ENCODE measurements at regions of chr1 and their contacts with region 1.

Region 1: DNA sequence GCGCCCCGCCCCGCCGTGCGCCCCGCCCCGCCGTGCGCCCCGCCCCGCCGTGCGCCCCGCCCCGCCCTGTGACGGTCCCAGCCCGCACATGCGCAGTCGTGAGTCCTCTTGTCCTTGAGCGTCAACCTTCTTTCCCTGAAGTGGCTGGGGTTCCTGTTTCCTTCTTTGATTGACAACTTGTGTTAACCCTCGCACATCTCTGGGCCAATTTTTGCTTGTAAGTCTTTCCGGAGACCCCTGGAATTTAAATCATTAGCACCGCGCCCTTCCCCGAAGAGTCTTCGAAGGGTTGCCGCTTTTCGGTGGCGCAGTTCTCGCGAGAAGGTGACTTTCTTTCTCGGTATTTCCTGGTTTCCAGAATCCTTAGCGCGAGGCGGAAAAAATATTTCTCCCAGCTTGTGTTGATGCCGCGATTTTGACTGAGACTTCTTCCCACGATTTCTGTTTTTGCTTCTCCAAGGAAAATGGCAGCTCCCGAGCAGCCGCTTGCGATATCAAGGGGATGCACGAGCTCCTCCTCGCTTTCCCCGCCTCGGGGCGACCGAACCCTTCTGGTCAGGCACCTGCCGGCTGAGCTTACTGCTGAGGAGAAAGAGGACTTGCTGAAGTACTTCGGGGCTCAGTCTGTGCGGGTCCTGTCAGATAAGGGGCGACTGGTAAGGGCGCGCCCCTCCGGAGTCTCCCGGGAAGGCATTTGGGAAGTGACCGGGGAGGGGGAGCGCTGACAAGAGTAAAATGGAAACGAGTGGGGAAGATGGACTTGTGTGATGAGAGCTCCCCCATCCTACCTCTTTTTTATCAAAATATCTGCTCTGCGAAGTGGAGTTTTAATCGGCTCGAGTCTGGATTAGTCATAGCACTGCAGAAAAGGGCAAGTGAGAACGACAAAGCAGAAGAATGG is at the start of gene RNPC3:
- DNase-seq: peak; percentile 95
- ATAC-seq: peak; percentile 80
- H3K4me3 ChIP-seq: peak within 1 kb of the TSS; percentile 82 to 100 (median 93)
- H3K4me3 Mint-ChIP-seq: peak within 1 kb of the TSS; percentile 99
- H3K27ac ChIP-seq: peak within 1 kb of the TSS; percentile 94 to 95
- H3K27ac Mint-ChIP-seq: peak within 1 kb of the TSS; percentile 99
- H3K4me1 ChIP-seq: peaks cover 6 to 26% of the 10 kb centered on the region in 2 donors
- H3K4me1 Mint-ChIP-seq: peaks cover 44% of the 10 kb centered on the region
- H3K27me3 ChIP-seq: no peaks in the 10 kb centered on the region
- H3K27me3 Mint-ChIP-seq: no peaks in the 10 kb centered on the region
- CTCF ChIP-seq: no peak
- total RNA-seq, gene RNPC3: 82.6 and 83.6 TPM in 2 replicates

Region 2: GRCh38 chr1:103514920-103515503 is 10.8 kb before region 1 on chr1:
- CTCF ChIA-PET with region 1: interaction called, 13 read pairs
- POLR2A ChIA-PET with region 1: no interaction called
- intact Hi-C with region 1: no loop called
- DNase-seq: peak; percentile 69
- ATAC-seq: peak; percentile 95
- H3K4me3 ChIP-seq: no peak overlapping the region
- H3K4me3 Mint-ChIP-seq: no peak overlapping the region
- H3K27ac ChIP-seq: no peak overlapping the region
- H3K27ac Mint-ChIP-seq: no peak overlapping the region
- H3K4me1 ChIP-seq: no peaks in the 10 kb centered on the region
- H3K4me1 Mint-ChIP-seq: peaks cover 8% of the 10 kb centered on the region
- H3K27me3 ChIP-seq: no peaks in the 10 kb centered on the region
- H3K27me3 Mint-ChIP-seq: no peaks in the 10 kb centered on the region
- CTCF ChIP-seq: peak; percentile 94

Region 3: DNA sequence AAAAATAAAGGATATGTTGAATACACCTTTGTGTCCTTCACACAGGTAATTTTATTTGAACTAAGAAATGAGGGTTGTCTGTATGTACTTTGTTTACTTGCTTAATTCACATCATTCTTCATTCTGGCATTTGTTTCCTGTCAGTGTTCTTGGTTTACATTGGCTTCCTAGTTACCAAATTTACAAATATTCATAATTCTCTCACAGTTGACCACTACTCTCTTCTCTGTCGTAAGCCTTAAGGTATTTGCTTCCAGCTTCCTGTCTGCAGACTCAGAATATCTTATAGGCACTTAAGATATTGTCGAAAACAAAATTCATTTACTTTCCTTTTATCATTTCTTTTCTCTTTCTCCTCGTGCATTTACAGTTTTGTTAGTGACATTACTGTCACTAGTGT is 15.6 kb after region 1 on chr1:
- CTCF ChIA-PET with region 1: no interaction called
- POLR2A ChIA-PET with region 1: no interaction called
- intact Hi-C with region 1: no loop called
- DNase-seq: no peak
- ATAC-seq: no peak
- H3K4me3 ChIP-seq: no peak overlapping the region
- H3K4me3 Mint-ChIP-seq: no peak overlapping the region
- H3K27ac ChIP-seq: no peak overlapping the region
- H3K27ac Mint-ChIP-seq: no peak overlapping the region
- H3K4me1 ChIP-seq: no peaks in the 10 kb centered on the region
- H3K4me1 Mint-ChIP-seq: no peaks in the 10 kb centered on the region
- H3K27me3 ChIP-seq: no peaks in the 10 kb centered on the region
- H3K27me3 Mint-ChIP-seq: no peaks in the 10 kb centered on the region
- CTCF ChIP-seq: no peak